ENCODE measurements at regions of chr6 and their contacts with region 1.

Region 1: DNA sequence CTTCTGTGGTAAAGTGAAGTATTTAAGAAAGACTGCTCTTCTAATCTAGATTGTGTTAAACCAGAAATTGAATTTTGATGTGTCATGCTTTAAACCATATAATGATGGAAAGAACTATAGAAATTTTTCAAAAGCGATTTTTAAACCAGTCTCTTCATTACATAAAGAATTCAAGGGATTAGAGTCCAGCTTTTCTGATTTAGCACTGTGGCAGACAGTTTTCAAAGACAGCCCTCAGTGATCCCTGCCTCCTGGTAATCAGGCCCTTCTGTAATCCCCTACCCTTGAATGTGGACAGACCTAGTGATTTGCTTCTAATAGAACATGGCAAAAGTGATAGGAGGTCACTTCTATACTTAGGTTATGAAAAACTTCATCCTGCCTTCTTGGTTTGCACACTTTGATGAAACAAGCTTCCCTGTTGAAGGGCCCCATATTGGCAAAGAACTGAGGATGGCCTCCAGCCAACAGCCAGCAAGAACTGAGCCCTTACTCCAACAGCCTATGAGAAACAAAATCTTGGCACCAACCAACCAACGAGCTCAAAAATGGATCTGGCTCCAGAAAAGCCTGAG is 191.4 kb downstream of the DST start:
- DNase-seq: peak; percentile 74 to 83 (median 81)
- ATAC-seq: peak; percentile 71 to 88 (median 78)
- H3K4me3 ChIP-seq: no peak overlapping the region
- H3K27ac ChIP-seq: peak overlapping the region; percentile 39 to 83 (median 70)
- H3K4me1 ChIP-seq: peaks cover 0 to 31% (median 14%) of the 10 kb centered on the region in 12 donors
- H3K27me3 ChIP-seq: no peaks in the 10 kb centered on the region
- CTCF ChIP-seq: no peak
- POLR2A ChIP-seq: no peak

Region 2: GRCh38 chr6:56246881-56247653 is 204.2 kb before region 1 on chr6 and contains the start of gene COL21A1:
- intact Hi-C with region 1: no loop called
- DNase-seq: peak; percentile 45 to 69 (median 52)
- ATAC-seq: peak; percentile 54 to 91 (median 82)
- H3K4me3 ChIP-seq: peak within 1 kb of the TSS; percentile 13 to 67 (median 55)
- H3K27ac ChIP-seq: peak within 1 kb of the TSS in 7 of 12 donors; percentile 6 to 55 (median 27)
- H3K4me1 ChIP-seq: peaks cover 0 to 29% (median 5%) of the 10 kb centered on the region in 12 donors
- H3K27me3 ChIP-seq: peaks cover 0 to 10% (median 0%) of the 10 kb centered on the region in 9 donors
- CTCF ChIP-seq: peak in 7 of 12 donors; percentile 11 to 43 (median 28)
- POLR2A ChIP-seq: no peak
- total RNA-seq, gene COL21A1: 23.9 to 110 (median 56.3) TPM

Region 3: GRCh38 chr6:56387621-56388394 is 63.4 kb before region 1 on chr6:
- intact Hi-C with region 1: loop called in 2 of 10 experiments (anchors 5 to 10 kb)
- DNase-seq: peak in 3 of 5 donors; percentile 17 to 58 (median 34)
- ATAC-seq: peak; percentile 83 to 95 (median 90)
- H3K4me3 ChIP-seq: no peak overlapping the region
- H3K27ac ChIP-seq: no peak overlapping the region
- H3K4me1 ChIP-seq: peaks cover 0 to 37% (median 10%) of the 10 kb centered on the region in 12 donors
- H3K27me3 ChIP-seq: no peaks in the 10 kb centered on the region
- CTCF ChIP-seq: no peak
- POLR2A ChIP-seq: no peak

Measured in heart left ventricle (tissue), 16 donors.